Transverse colon (tissue), 4 donors: ENCODE measurements at regions of chr9 and their contacts with region 1.

Region 1: GRCh38 chr9:89410641-89411350 is 87.1 kb downstream of the SEMA4D start:
- DNase-seq: no peak
- H3K4me3 ChIP-seq: no peak overlapping the region
- H3K27ac ChIP-seq: no peak overlapping the region
- H3K4me1 ChIP-seq: peaks cover 0 to 14% (median 4%) of the 10 kb centered on the region in 4 donors
- H3K27me3 ChIP-seq: no peaks in the 10 kb centered on the region
- CTCF ChIP-seq: peak in 3 of 5 experiments; percentile 10 to 19 (median 11)
- EP300 ChIP-seq: no peak
- POLR2A ChIP-seq: no peak

Region 2: DNA sequence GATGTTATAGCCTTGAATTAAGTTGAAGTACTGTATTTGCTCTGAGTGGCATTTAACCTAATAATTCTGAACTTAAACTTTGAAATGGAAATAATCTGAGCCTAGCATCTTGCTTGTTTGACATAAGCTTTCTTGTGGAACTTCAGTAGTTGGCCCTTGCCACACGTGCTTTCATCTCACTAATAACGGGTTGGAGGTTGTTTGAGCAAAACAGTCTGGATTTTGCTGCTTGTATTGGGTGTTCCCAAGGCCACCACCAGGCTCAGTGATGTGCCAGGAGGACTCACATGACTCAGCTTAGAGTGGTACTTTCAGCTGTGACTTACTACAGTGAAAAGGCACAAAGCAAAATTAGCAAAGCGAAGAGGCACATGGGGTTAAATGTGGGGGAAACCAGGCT is 56.8 kb before region 1 on chr9:
- in situ Hi-C with region 1: no loop called
- intact Hi-C with region 1: no loop called
- DNase-seq: no peak
- H3K4me3 ChIP-seq: no peak overlapping the region
- H3K27ac ChIP-seq: no peak overlapping the region
- H3K4me1 ChIP-seq: no peaks in the 10 kb centered on the region
- H3K27me3 ChIP-seq: no peaks in the 10 kb centered on the region
- CTCF ChIP-seq: no peak
- EP300 ChIP-seq: no peak
- POLR2A ChIP-seq: no peak

Region 3: DNA sequence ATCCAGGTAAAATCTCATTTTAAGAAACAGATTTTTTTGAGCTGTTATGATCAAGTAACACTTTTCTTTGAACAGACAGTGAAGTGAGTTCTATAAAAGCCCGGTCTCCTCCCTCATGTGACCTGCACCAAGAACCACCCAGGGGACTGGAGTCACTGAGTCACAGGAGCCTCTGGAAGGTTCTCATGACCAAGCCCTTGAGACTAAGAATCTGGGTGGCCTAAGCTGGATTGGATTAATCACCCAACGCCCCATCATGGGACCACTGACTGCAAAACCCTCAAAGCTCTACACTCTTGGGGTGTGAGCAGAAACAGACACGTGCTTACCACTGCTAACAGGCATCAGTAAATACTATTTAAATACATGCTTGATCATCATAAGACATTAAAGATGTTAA is 44.1 kb before region 1 on chr9:
- in situ Hi-C with region 1: no loop called
- intact Hi-C with region 1: loop called (anchors 1 kb)
- DNase-seq: no peak
- H3K4me3 ChIP-seq: no peak overlapping the region
- H3K27ac ChIP-seq: no peak overlapping the region
- H3K4me1 ChIP-seq: no peaks in the 10 kb centered on the region
- H3K27me3 ChIP-seq: no peaks in the 10 kb centered on the region
- CTCF ChIP-seq: no peak
- EP300 ChIP-seq: no peak
- POLR2A ChIP-seq: no peak

Region 4: DNA sequence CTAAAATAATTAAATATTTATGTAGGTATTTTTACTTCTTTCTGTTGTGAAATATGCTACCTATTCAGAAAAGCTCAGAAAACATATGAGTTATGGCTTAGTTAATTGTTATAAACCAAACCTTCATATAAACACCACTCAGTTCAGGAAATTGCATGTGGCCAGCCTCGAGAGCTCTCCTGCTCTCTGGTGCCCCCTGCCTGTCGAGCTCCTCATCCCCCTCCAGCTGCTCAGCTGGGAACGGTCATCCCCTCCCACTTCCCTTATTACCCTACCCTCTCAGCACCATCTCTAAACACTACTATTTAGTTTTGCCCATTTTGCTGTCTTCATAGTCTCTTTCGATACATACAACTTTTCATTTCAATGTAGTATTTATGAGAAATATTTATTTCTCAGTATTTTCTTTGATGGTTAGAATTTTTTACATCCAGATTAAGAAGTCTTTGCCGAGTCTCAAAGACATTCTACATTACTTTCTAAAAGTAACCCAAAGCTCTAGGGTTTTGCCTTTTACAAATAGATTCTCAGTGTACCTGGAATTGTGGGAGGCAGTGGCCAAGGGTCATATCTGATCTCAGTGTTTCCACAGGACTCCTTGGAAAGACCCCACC is 138.3 kb after region 1 on chr9:
- in situ Hi-C with region 1: loop called in 3 of 4 experiments (anchors 25 kb)
- intact Hi-C with region 1: no loop called
- DNase-seq: peak; percentile 89
- H3K4me3 ChIP-seq: no peak overlapping the region
- H3K27ac ChIP-seq: no peak overlapping the region
- H3K4me1 ChIP-seq: peaks cover 0 to 7% (median 0%) of the 10 kb centered on the region in 4 donors
- H3K27me3 ChIP-seq: no peaks in the 10 kb centered on the region
- CTCF ChIP-seq: peak; percentile 89 to 96 (median 90)
- EP300 ChIP-seq: no peak
- POLR2A ChIP-seq: no peak